Naive thymus-derived CD4-positive, alpha-beta T cell (primary cell): ENCODE measurements at regions of chr11 and their contacts with region 1.

Region 1: GRCh38 chr11:118757876-118758399 is 33.0 kb downstream of the DDX6 start:
- DNase-seq: no peak
- ATAC-seq: no peak
- H3K4me3 ChIP-seq: no peak overlapping the region
- H3K4me3 Mint-ChIP-seq: no peak overlapping the region
- H3K27ac ChIP-seq: no peak overlapping the region
- H3K27ac Mint-ChIP-seq: peak overlapping the region in 7 of 9 donors; percentile 21 to 82 (median 59)
- H3K4me1 ChIP-seq: no peaks in the 10 kb centered on the region
- H3K4me1 Mint-ChIP-seq: peaks cover 0 to 22% (median 9%) of the 10 kb centered on the region in 7 donors
- H3K27me3 ChIP-seq: no peaks in the 10 kb centered on the region
- H3K27me3 Mint-ChIP-seq: no peaks in the 10 kb centered on the region

Region 2: DNA sequence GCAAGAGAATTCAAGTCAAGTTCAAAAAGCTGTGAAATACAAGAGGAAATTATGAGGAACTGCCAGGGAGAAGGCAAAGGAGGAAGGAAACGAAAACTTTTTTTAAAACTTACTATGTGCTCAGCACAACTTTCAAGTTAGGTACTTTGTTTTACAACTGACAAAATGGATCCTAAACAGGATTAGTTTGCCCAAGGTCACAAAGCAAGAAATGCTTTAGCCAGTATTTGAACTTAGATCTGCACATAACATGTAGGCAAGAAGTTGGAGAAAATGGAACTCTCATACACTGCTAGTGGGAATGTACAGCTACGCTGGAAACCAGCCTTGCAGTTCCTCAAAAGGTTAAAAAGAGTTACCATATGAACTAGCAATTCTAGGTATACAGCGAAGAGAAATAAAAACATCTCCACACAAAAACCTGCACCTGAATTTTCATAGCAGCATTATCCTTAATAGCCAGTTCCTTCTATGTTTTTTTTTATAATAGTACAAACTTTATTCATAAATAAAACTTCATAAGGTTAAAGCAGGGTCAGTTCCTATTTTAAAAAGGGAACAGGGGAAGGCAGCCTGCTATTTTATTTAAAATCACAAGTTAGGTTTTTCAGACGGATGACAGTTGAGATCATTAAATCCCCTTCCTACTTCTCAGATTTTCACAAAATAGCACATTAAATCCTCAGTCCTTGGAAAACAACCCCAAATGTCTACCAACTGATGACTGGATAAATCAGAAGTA is 13.8 kb after region 1 on chr11:
- CTCF ChIA-PET with region 1: no interaction called
- POLR2A ChIA-PET with region 1: interaction called, 4 read pairs
- intact Hi-C with region 1: loop called in 1 of 2 experiments (anchors 2 kb)
- DNase-seq: no peak
- ATAC-seq: peak; percentile 31
- H3K4me3 ChIP-seq: no peak overlapping the region
- H3K4me3 Mint-ChIP-seq: peak overlapping the region; percentile 7 to 83 (median 73)
- H3K27ac ChIP-seq: peak overlapping the region; percentile 57
- H3K27ac Mint-ChIP-seq: peak overlapping the region in 8 of 9 donors; percentile 42 to 92 (median 80)
- H3K4me1 ChIP-seq: peaks cover 54 to 76% of the 10 kb centered on the region in 2 donors
- H3K4me1 Mint-ChIP-seq: peaks cover 55 to 97% (median 88%) of the 10 kb centered on the region in 7 donors
- H3K27me3 ChIP-seq: no peaks in the 10 kb centered on the region
- H3K27me3 Mint-ChIP-seq: no peaks in the 10 kb centered on the region